ENCODE measurements at regions of chr12 and their contacts with region 1.

Region 1: GRCh38 chr12:53984901-53985709 is at the start of gene HOXC10:
- DNase-seq: peak; percentile 99
- H3K4me3 ChIP-seq: peak within 1 kb of the TSS; percentile 72
- H3K27ac ChIP-seq: peak within 1 kb of the TSS; percentile 81
- H3K4me1 ChIP-seq: peaks cover 43% of the 10 kb centered on the region
- H3K27me3 ChIP-seq: no peaks in the 10 kb centered on the region
- CTCF ChIP-seq: peak; percentile 80
- total RNA-seq, gene HOXC10: 27.8 and 30.4 TPM in 2 replicates

Region 2: GRCh38 chr12:53701518-53702260 is 283.4 kb before region 1 on chr12:
- CTCF ChIA-PET with region 1: no interaction called
- POLR2A ChIA-PET with region 1: no interaction called
- intact Hi-C with region 1: loop called (anchors 5 kb)
- DNase-seq: peak; percentile 85
- H3K4me3 ChIP-seq: no peak overlapping the region
- H3K27ac ChIP-seq: no peak overlapping the region
- H3K4me1 ChIP-seq: peaks cover 15% of the 10 kb centered on the region
- H3K27me3 ChIP-seq: no peaks in the 10 kb centered on the region
- CTCF ChIP-seq: peak; percentile 98

Region 3: DNA sequence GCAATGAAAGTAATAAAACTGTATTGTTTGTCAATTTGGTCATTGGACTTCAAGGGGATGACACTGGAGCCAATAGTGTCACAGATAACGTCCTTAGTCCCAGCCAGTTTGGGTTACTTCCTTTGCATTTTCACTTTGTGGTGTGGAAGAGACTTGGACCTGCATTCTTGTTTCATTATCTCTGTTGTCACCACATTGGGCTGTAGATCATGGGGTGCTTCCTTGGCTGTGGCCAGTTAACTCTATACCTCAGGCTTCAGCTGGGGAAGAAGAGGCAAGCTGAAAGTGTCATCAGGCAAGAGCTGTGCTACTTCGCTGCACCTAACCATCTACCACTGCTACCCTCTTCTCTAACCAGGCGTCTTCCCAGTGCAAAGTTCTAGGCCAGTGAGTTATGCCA is 218.2 kb before region 1 on chr12:
- CTCF ChIA-PET with region 1: no interaction called
- POLR2A ChIA-PET with region 1: no interaction called
- intact Hi-C with region 1: loop called (anchors 5 kb)
- DNase-seq: no peak
- H3K4me3 ChIP-seq: no peak overlapping the region
- H3K27ac ChIP-seq: no peak overlapping the region
- H3K4me1 ChIP-seq: peaks cover 6% of the 10 kb centered on the region
- H3K27me3 ChIP-seq: no peaks in the 10 kb centered on the region
- CTCF ChIP-seq: no peak

Region 4: DNA sequence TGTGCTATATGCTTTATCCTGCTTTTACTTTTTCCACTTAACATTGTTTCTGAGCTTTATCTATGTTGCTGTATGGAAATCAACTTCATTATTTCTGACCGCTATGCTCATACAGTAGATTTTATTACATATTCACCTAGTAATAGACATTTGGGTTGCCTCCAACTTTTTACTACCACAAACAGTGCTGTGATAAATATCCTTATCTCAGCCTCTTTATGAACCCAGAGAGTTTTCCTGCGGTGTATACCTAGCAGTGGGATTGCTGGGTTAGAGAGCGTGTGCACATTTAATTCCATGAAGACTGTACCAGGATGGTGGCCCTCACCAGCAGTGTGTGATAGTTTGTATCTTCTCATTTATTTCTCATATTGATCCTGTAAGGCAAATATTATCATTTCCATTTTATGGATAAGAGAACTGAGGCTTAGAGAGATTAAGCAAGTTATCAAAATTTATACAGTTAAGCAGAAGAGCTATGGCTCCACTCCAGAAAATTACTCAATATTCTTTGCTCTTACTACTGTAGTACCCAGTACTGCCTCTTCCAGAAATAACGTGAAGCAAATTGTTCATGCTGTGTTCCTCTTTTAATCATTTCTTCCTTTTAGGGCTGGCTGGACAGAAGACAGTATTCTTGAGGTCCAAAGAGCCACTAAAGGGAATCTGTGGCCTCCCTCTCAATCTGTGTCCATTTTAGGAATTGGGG is 207.0 kb before region 1 on chr12:
- CTCF ChIA-PET with region 1: no interaction called
- POLR2A ChIA-PET with region 1: no interaction called
- intact Hi-C with region 1: no loop called
- DNase-seq: no peak
- H3K4me3 ChIP-seq: no peak overlapping the region
- H3K27ac ChIP-seq: no peak overlapping the region
- H3K4me1 ChIP-seq: peaks cover 17% of the 10 kb centered on the region
- H3K27me3 ChIP-seq: no peaks in the 10 kb centered on the region
- CTCF ChIP-seq: no peak

Region 5: DNA sequence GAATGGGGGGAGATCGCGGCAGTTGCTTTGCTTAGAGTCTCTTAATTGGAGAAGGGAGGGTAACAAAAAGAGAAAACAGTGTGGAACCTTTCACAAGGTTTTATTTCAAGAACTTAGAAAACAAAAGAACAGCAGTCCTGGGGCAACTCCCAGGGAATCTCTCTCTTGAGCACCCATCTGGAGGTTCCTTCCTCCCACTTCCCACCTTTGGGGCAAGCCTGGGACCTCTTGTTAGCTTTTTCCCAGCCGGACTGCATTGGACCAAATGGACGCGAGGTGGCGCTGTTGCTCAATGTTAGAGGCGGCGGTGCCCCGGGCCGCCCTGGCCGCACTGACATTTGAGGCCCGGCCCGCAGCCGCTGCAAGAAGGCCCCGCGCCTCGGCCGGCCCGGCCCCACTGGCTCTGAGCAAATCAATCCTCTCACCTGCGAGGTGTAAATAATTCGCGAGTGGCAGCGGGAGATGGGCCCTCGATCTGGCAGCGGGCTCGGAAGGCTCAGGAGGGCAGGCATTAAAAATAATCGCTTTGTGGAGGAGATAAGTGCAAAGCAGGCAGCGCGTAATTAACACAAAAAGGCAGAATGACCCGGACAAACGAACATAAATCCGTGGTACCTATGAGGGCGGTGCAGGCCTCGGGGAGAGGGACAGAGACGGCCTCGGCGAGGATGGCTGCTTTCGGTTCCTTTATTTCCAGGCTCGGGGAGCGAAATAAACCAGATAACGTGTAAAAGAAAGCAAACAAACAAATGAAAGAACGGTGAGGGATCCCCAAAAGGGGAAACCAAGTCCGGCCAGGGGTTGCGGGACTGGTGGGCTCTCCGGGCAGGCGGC is 21.0 kb after region 1 on chr12:
- CTCF ChIA-PET with region 1: interaction called, 14 read pairs
- POLR2A ChIA-PET with region 1: interaction called, 3 read pairs
- intact Hi-C with region 1: loop called (anchors 1 kb)
- DNase-seq: peak; percentile 86
- H3K4me3 ChIP-seq: no peak overlapping the region
- H3K27ac ChIP-seq: no peak overlapping the region
- H3K4me1 ChIP-seq: peaks cover 71% of the 10 kb centered on the region
- H3K27me3 ChIP-seq: no peaks in the 10 kb centered on the region
- CTCF ChIP-seq: peak; percentile 95

Region 6: GRCh38 chr12:54191550-54192022 is 206.5 kb after region 1 on chr12:
- CTCF ChIA-PET with region 1: interaction called, 14 read pairs
- POLR2A ChIA-PET with region 1: interaction called, 5 read pairs
- intact Hi-C with region 1: no loop called
- DNase-seq: peak; percentile 91
- H3K4me3 ChIP-seq: no peak overlapping the region
- H3K27ac ChIP-seq: no peak overlapping the region
- H3K4me1 ChIP-seq: peaks cover 34% of the 10 kb centered on the region
- H3K27me3 ChIP-seq: no peaks in the 10 kb centered on the region
- CTCF ChIP-seq: peak; percentile 91

Region 7: DNA sequence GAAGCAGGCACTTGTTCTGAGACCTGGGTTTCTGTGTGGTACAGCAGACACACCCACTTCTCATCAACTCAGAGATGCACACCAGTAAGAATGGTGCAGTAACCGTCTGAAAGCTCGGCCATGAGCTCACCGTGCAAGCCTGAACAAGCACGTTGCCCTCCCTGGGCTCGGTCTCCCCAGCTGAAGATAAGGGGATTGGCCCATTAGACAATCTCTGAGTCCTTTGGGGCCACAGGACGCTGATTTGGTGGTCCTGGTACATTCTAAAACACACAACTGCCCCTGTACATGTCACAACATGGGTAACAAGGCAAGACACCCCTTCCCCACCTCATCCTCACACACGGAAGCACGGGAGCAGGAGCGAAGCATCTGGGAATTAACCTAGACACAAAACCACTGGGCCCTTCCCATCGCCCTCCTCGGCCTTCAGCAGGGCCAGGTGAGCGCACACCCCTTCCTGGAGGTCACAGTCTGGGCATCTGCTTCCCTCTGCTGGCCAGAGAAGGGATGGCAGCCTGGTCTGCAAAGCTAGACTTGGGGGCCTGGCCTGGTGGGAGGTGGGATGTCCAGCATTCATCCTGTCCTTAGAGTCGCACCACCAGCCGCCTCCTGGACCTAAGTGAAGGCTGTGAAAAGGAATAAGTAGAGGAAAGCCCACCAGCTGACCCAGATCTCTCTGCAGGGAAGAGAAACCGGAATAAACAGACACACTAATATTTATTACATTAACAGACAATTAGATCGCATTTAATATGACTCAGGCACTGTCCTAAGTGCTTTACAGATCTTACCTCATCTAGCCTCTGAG is 222.6 kb after region 1 on chr12:
- CTCF ChIA-PET with region 1: interaction called, 25 read pairs
- POLR2A ChIA-PET with region 1: interaction called, 15 read pairs
- intact Hi-C with region 1: loop called (anchors 2 kb)
- DNase-seq: peak; percentile 73
- H3K4me3 ChIP-seq: no peak overlapping the region
- H3K27ac ChIP-seq: no peak overlapping the region
- H3K4me1 ChIP-seq: no peaks in the 10 kb centered on the region
- H3K27me3 ChIP-seq: no peaks in the 10 kb centered on the region
- CTCF ChIP-seq: peak; percentile 97

Region 8: GRCh38 chr12:54379401-54380201 is 394.5 kb after region 1 on chr12:
- CTCF ChIA-PET with region 1: interaction called, 5 read pairs
- POLR2A ChIA-PET with region 1: no interaction called
- intact Hi-C with region 1: loop called (anchors 10 kb)
- DNase-seq: peak; percentile 95
- H3K4me3 ChIP-seq: peak overlapping the region; percentile 39
- H3K27ac ChIP-seq: no peak overlapping the region
- H3K4me1 ChIP-seq: peaks cover 12% of the 10 kb centered on the region
- H3K27me3 ChIP-seq: no peaks in the 10 kb centered on the region
- CTCF ChIP-seq: peak; percentile 100

Measured in A673 (cell line).